AG04450 (cell line): ENCODE measurements at regions of chr7 and their contacts with region 1.

Region 1: DNA sequence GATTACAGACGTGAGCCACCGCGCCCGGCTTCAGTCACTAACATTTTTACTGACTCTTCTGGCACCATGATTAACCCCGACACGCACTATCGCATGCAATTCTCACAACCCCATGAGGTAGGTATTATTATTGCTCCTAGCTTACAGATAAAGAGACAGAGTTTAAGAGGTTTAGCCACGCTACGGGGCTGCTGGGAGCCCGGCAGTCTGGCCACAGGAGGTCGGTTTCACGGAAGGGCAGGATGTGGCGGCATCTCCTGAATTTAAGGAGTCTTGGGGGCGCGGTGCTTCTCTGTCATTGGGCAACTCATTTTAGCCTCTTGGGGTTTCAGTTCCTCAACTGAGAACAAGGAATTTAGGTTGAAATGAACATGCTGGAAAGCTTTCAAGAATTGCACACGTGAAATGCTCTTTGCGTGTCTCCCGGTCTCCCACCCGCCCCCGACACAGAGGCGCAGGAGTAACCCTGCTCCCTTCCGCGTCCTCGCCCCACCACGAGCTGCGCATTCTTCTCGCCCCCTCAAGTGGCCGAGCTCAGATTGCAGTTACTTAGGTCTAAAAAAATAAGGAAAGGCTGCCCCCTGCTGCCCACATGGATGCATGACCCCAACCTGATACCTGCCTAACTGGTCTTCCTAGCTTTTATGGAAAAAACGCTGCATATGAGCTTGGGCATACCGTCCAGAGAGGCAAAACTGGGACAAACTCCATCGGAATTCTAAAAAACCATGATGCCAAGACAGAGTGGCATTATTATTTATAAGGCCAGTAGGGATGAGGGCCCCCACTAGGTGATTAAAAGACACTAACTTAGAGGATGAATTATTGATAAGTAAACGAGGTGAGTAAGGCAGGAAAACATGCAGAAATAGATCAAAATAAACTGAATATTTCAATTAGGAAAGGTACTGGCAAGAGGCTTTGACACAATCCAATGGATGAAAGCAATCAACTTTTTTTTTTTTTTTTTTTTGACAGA is 12.4 kb downstream of the PRSS2 start:
- DNase-seq: peak; percentile 77
- H3K4me3 ChIP-seq: peak overlapping the region; percentile 33
- H3K27ac ChIP-seq: no peak overlapping the region
- H3K27me3 ChIP-seq: peaks cover 7% of the 10 kb centered on the region
- CTCF ChIP-seq: peak; percentile 90

Region 2: GRCh38 chr7:142496545-142497041 is 286.6 kb before region 1 on chr7:
- CTCF ChIA-PET with region 1: interaction called, 40 read pairs
- POLR2A ChIA-PET with region 1: no interaction called
- DNase-seq: no peak
- H3K4me3 ChIP-seq: no peak overlapping the region
- H3K27ac ChIP-seq: no peak overlapping the region
- H3K27me3 ChIP-seq: peaks cover 5% of the 10 kb centered on the region
- CTCF ChIP-seq: peak; percentile 70

Region 3: GRCh38 chr7:142523821-142524460 is 259.3 kb before region 1 on chr7:
- CTCF ChIA-PET with region 1: interaction called, 138 read pairs
- POLR2A ChIA-PET with region 1: no interaction called
- DNase-seq: no peak
- H3K4me3 ChIP-seq: no peak overlapping the region
- H3K27ac ChIP-seq: no peak overlapping the region
- H3K27me3 ChIP-seq: peaks cover 15% of the 10 kb centered on the region
- CTCF ChIP-seq: peak; percentile 32; the same call in 1 of the 2 replicates

Region 4: GRCh38 chr7:142587578-142588191 is 195.5 kb before region 1 on chr7:
- CTCF ChIA-PET with region 1: interaction called, 13 read pairs
- POLR2A ChIA-PET with region 1: no interaction called
- DNase-seq: no peak
- H3K4me3 ChIP-seq: no peak overlapping the region
- H3K27ac ChIP-seq: no peak overlapping the region
- H3K27me3 ChIP-seq: no peaks in the 10 kb centered on the region
- CTCF ChIP-seq: peak; percentile 69

Region 5: DNA sequence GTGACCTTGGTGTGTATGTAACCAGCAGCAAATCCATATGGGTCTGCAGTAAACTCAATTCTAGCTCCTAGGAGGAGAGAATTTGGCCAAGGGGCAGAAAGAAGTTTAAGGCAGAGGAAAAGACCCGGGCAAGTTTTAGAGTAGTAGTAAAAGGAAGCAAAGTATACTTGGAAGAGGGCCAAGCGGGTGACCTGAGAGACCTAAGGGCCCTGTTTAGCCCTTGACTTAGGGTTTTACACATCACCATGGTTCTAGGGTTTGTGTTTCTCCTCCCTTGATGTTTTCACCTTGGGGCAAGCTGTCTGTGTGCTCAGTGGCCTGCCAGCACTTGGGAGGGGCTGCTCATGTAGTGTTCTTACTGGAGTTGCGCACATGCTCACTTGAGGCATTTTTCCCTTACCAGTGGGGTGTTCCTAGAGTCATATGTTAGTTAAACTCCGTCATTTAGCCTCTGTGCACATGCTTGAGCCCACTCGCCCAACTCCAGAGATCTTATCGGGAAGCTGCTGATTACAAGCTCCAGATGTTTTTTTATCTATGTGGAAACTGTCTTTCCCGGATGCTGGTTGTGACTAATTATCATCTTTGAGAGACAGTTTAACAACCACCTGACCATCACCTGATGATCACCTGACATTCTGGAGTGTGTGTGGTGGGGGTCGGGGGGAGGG is 171.5 kb before region 1 on chr7:
- CTCF ChIA-PET with region 1: interaction called, 30 read pairs
- POLR2A ChIA-PET with region 1: no interaction called
- DNase-seq: no peak
- H3K4me3 ChIP-seq: no peak overlapping the region
- H3K27ac ChIP-seq: no peak overlapping the region
- H3K27me3 ChIP-seq: peaks cover 2% of the 10 kb centered on the region
- CTCF ChIP-seq: no peak

Region 6: DNA sequence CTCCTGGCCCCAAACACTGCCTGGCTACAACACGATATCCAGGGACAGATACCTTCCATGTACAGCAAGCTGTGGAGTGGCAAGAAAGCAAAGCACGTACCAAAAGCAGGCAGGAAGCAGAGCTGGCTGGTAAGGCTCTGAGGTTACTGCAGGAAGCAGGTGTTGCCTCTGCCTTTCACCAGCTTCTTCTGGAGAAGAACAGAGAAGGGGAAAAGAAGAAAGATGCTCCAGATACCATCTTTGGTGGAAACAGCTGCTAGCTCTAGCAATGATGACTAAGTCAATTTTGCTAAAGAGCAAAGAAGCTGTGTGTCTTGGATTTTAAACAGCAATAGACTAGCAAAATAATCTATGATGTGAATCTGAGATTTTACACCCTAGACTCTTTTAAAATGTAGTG is 68.8 kb before region 1 on chr7:
- CTCF ChIA-PET with region 1: interaction called, 10 read pairs
- POLR2A ChIA-PET with region 1: no interaction called
- DNase-seq: no peak
- H3K4me3 ChIP-seq: no peak overlapping the region
- H3K27ac ChIP-seq: no peak overlapping the region
- H3K27me3 ChIP-seq: no peaks in the 10 kb centered on the region
- CTCF ChIP-seq: no peak

Region 7: DNA sequence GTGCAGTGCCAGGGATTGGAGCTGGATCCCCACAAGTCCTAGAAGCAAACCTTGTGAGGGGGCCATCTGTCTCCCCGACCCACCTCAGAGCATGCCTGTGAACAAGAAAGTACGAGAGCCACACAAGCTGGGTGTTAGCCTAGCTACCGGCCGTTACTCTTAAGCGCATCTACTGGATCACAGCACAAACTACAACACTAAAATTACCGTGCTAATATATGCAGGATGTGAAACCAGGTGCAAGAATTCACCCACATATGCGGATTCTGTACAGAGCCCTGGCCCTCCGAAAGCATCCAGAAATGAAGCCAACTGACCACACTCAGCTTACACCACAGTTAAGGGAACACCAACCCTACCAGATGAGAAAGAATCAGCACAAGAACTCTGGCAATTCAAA is 49.9 kb before region 1 on chr7:
- CTCF ChIA-PET with region 1: no interaction called
- POLR2A ChIA-PET with region 1: no interaction called
- DNase-seq: no peak
- H3K4me3 ChIP-seq: no peak overlapping the region
- H3K27ac ChIP-seq: no peak overlapping the region
- H3K27me3 ChIP-seq: no peaks in the 10 kb centered on the region
- CTCF ChIP-seq: no peak

Region 8: GRCh38 chr7:142819530-142819929 is 36.3 kb after region 1 on chr7:
- CTCF ChIA-PET with region 1: interaction called, 11 read pairs
- POLR2A ChIA-PET with region 1: no interaction called
- DNase-seq: no peak
- H3K4me3 ChIP-seq: no peak overlapping the region
- H3K27ac ChIP-seq: no peak overlapping the region
- H3K27me3 ChIP-seq: no peaks in the 10 kb centered on the region
- CTCF ChIP-seq: no peak